Activated T-helper 1 cell treated with anti-CD3 and anti-CD28 coated beads, Interleukin-12 subunit alpha, Interleukin-12 subunit beta, Interleukin-2, Interleukin-4 antibody, amounts not matched to agents 30 ng/mL and 10 ng/mL and 1 ng/mL, durations not matched to agents 14 hours and 24 hours and 36 hours (primary cell): ENCODE measurements at regions of chr3 and their contacts with region 1.

Region 1: GRCh38 chr3:143236226-143236964 is 116.8 kb downstream of the CHST2 start:
- DNase-seq: no peak
- H3K4me3 Mint-ChIP-seq: no peak overlapping the region
- H3K27ac Mint-ChIP-seq: peak overlapping the region; percentile 56
- H3K4me1 Mint-ChIP-seq: peaks cover 6% of the 10 kb centered on the region
- H3K27me3 Mint-ChIP-seq: peaks cover 2% of the 10 kb centered on the region

Region 2: DNA sequence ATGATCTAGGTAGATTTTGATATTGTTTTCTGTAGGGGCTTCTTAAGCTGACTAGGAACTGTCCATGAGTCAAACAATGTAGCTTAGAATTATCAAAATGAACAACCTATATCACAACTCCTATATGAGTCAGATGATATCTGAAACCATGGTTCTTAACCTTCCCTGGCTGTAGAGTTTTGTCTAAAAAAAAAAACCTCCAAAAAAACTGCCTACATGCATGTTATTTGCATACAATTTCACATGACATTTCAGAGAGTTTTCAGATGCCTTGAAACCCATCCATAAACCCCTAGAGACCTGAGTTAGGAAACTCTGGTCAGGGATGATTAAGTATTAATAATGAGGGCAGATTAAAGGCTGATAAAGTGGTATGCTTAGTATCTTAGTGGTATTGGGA is 40.2 kb after region 1 on chr3:
- intact Hi-C with region 1: loop called (anchors 2 kb)
- DNase-seq: no peak
- H3K4me3 Mint-ChIP-seq: no peak overlapping the region
- H3K27ac Mint-ChIP-seq: no peak overlapping the region
- H3K4me1 Mint-ChIP-seq: peaks cover 11% of the 10 kb centered on the region
- H3K27me3 Mint-ChIP-seq: no peaks in the 10 kb centered on the region

Region 3: DNA sequence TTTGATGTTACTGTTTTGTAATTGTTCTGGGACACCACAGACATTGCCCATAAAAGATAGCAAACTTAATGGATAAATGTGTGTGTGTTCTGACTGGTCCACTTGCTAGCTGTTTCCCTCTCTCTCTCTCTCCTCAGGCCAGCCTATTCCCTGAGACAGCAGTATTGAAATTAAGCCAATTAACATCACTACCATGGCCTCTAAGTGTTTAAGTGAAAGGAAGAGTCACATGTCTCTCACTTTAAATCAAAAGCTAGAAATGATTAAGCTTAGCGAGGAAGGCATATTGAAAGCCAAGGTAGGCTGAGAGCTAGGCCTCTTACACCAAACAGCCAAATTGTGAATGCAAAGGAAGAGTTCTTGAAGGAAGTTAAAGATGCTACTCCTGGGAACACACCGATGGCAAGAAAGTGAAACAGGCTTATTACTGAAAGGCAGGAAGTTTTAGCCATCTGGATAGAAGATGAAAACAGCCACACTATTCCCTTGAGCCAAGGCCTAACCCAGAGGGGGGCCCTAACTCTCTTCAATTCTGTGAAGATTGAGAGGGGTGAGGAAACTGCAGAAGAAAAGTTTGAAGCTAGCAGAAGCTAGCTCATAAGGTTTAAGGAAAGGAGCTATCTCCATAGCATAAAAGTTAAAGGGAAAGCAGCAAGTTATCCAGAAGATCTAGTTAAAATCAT is 178.3 kb after region 1 on chr3:
- intact Hi-C with region 1: no loop called
- DNase-seq: no peak
- H3K4me3 Mint-ChIP-seq: no peak overlapping the region
- H3K27ac Mint-ChIP-seq: no peak overlapping the region
- H3K4me1 Mint-ChIP-seq: peaks cover 8% of the 10 kb centered on the region
- H3K27me3 Mint-ChIP-seq: no peaks in the 10 kb centered on the region